Panc1 (cell line): ENCODE measurements at regions of chr7 and their contacts with region 1.

Region 1: DNA sequence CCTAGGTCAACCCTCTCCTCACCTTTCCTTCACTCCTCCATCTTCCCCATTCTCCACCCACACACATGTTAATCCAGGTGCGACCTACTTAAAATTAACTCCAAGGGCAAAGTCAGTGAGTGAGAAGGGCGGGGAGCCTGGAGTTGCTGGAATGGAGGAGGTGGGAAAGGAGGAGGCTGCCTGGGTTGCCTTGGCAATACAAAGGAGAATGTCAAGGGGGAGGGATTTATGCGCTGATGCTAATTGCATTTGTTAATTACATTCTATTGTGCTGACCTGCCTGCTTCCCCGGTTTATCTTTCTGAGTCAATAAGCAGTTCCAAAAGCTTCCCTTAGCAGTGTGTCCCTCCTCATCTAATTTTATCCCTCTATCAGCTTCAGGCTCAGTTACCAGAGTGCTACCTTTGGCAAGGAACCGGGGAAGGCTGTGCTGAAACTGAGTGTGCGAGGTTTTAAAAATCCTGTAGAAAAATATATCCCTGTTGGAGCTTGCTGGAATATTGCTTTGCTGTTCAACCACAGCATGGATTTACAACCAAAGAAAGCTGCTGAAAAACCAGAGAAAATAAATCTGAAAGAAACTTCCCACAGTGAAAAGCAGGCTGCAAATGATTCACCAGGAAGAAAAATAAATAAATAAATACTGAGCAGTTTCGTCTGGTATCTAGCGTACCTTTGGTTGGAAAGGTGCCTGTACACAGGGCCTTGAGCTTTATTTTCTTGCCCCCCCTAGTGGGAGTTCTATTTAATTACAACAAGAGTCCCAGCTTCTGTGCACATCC is 113.2 kb upstream of the DGKB start:
- DNase-seq: peak; percentile 22
- ATAC-seq: peak; percentile 97
- H3K4me3 ChIP-seq: peak overlapping the region; percentile 1 to 7; a peak in 2 of 4 replicates
- H3K27ac ChIP-seq: no peak overlapping the region
- H3K4me1 ChIP-seq: no peaks in the 10 kb centered on the region
- H3K27me3 ChIP-seq: no peaks in the 10 kb centered on the region
- CTCF ChIP-seq: peak; percentile 79

Region 2: DNA sequence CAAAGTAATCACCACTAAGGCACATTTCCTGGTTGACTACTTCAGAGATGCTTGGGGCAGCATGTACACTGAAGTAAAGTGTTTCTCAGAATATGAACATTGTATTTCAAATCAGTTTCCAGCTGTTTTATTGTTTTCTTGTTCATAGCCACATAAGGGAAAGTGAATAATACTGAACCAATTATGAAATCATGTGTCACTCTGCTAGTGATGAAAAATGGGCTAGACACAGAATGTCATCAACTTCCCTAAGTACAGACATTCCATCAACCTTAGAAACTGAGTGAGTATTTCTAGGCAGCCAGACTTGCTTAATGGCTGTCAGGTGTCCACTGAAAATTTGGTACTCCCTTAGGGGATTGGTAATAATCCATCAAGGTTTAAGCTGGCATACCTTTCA is 1724.8 kb before region 1 on chr7:
- CTCF ChIA-PET with region 1: interaction called, 14 read pairs
- POLR2A ChIA-PET with region 1: no interaction called
- in situ Hi-C with region 1: no loop called
- intact Hi-C with region 1: no loop called
- DNase-seq: no peak
- ATAC-seq: no peak
- H3K4me3 ChIP-seq: no peak overlapping the region
- H3K27ac ChIP-seq: no peak overlapping the region
- H3K4me1 ChIP-seq: no peaks in the 10 kb centered on the region
- H3K27me3 ChIP-seq: no peaks in the 10 kb centered on the region
- CTCF ChIP-seq: no peak